Calu3 (cell line): ENCODE measurements at regions of chr3 and their contacts with region 1.

Region 1: DNA sequence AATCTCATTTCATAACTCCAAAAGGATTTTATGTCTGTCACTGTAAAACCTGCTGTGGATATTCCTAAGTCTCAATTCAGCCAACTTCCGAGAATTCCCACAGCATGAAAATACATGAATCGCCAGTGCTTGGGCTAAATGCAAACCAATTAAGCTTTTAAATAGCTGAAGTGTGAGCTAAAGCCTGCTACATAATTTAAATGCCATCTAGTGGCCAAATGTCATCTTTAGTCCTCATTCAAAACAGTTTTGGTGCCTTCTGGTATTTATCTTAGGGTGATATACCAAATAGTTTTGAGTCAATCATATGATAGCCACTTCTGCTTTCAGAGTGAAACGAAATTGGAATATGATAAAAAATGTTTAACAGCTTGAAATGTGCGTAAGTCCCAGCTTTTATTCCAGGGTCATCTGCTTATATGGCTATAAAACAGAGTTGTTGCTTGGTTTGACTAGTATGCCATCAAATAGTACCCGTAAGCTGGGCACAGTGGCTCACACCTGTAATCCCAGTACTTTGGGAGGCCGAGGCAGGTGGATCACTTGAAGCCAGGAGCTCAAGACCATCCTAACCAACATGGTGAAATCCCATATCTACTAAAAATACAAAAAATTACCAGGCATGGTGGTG is 41.8 kb upstream of the CCNL1 start:
- DNase-seq: no peak
- H3K4me3 Mint-ChIP-seq: no peak overlapping the region
- H3K27ac Mint-ChIP-seq: no peak overlapping the region
- H3K4me1 Mint-ChIP-seq: no peaks in the 10 kb centered on the region
- H3K27me3 Mint-ChIP-seq: no peaks in the 10 kb centered on the region
- CTCF ChIP-seq: peak; percentile 64

Region 2: GRCh38 chr3:155995525-155996351 is 1206.0 kb before region 1 on chr3:
- CTCF ChIA-PET with region 1: no interaction called
- intact Hi-C with region 1: loop called (anchors 5 kb)
- DNase-seq: no peak
- H3K4me3 Mint-ChIP-seq: no peak overlapping the region
- H3K27ac Mint-ChIP-seq: no peak overlapping the region
- H3K4me1 Mint-ChIP-seq: peaks cover 7% of the 10 kb centered on the region
- H3K27me3 Mint-ChIP-seq: peaks cover 12% of the 10 kb centered on the region
- CTCF ChIP-seq: peak; percentile 36

Region 3: DNA sequence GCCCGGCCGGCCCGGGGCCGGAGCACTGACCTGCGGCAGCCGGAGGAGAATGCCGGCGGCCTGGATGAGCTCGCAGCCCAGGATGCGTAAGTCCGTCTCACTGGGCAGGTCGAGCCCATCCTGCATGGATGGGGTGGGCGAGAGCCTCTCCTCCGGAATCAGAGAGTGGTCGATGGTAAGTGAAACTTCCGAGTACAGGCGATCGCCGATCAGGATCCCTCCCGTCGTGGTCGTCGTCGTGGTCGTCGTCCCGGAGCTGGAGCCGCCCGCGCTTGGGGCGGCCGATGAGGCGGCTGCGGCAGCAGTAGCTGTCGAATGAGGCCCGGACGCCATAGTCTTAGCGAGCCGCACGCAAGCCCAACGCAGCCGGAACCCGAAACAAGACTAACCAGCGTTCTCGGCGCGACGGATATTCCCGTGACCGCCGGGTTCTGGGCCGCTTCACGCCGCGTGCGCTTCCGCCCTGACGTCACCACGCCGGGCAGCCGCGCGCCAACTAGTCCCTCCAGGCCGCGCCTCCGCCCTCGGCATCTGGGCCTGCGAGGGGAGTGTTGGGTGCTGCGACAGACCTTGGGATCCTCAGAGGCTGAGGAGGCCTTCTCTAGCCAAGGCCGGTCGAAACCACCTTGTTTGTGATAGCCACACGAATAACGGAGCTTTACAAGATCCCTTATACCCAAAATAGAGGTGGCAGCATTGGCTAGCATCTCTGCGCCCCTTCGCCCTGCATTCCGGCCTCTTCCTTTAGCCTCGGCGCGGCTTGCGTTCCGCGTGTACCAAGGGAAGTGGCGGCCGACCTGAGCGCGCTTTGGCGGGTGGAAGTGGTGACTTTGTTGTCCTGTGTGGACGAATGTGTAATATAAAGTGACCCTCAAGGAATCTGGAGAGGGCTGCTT is 41.8 kb before region 1 on chr3 and contains the start of gene CCNL1:
- CTCF ChIA-PET with region 1: interaction called, 15 read pairs
- intact Hi-C with region 1: loop called (anchors 1 kb)
- DNase-seq: peak; percentile 99
- H3K4me3 Mint-ChIP-seq: peak within 1 kb of the TSS; percentile 89
- H3K27ac Mint-ChIP-seq: peak within 1 kb of the TSS; percentile 99
- H3K4me1 Mint-ChIP-seq: peaks cover 58% of the 10 kb centered on the region
- H3K27me3 Mint-ChIP-seq: no peaks in the 10 kb centered on the region
- CTCF ChIP-seq: no peak
- total RNA-seq, gene CCNL1: 291 and 303 TPM in 2 replicates

Region 4: DNA sequence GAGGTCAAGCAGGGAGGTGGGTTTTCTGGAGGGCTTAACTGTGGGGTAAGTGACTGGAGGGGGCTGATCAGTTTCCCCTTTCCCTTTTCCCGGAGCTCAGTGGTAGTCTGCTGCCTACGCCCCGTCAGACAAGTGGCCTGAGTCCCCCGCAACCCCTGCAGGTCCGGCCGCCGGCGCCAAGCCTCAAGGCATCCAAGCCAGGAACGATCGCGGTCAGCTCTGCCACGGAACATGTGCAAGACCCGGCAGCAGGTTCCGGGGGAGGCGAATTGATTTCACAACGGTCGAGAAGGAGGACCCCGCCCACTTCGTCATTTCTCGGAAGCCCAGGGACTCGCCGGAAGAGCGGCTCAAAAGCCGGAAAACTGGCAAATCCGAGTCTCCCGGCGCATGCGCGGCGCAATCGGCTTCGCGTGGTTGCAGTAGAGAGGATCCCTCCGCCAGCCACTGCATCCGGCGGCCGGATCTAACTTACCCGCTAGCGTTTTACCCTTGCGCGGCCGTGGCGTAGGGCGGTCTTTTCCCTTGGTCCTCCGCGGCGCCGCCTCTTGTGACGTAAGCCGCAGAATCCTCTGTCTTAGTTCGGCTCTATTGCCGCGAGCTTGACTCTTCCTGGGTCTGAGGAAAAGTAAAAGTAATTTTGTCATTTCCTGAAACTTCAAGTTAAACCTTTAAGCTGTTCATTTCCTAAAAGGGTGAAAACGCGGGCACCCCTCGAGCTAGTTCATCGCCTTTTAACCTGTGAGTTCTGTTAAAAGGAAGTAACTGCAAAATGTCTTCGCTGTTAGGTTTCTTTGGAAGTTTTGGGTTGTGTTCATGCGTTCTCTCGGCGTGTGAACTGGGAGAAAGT is 26.9 kb before region 1 on chr3:
- CTCF ChIA-PET with region 1: interaction called, 19 read pairs
- intact Hi-C with region 1: no loop called
- DNase-seq: peak; percentile 100
- H3K4me3 Mint-ChIP-seq: peak overlapping the region; percentile 78
- H3K27ac Mint-ChIP-seq: peak overlapping the region; percentile 92
- H3K4me1 Mint-ChIP-seq: peaks cover 31% of the 10 kb centered on the region
- H3K27me3 Mint-ChIP-seq: no peaks in the 10 kb centered on the region
- CTCF ChIP-seq: no peak

Region 5: DNA sequence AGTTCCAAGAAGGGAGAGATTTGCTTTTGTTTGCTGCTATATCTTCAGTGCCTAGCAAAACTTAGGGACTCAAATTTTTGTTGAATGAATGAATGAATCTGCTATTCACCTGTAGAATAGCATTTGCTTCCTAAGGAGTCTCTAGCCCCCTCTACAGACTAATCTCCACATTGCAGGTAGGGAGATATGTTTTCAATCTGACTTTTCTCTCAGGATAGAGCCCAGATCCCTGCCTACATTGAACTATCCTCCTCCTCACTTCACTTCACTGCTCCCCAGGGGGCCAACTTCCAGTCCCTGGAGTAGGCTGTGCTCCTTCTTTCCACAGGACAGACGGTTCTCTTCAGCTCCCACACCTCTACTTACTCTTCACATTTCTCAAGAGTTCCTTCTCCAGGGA is 153.0 kb after region 1 on chr3:
- CTCF ChIA-PET with region 1: interaction called, 6 read pairs
- intact Hi-C with region 1: loop called (anchors 1 kb)
- DNase-seq: peak; percentile 70
- H3K4me3 Mint-ChIP-seq: no peak overlapping the region
- H3K27ac Mint-ChIP-seq: no peak overlapping the region
- H3K4me1 Mint-ChIP-seq: peaks cover 8% of the 10 kb centered on the region
- H3K27me3 Mint-ChIP-seq: no peaks in the 10 kb centered on the region
- CTCF ChIP-seq: peak; percentile 29

Region 6: DNA sequence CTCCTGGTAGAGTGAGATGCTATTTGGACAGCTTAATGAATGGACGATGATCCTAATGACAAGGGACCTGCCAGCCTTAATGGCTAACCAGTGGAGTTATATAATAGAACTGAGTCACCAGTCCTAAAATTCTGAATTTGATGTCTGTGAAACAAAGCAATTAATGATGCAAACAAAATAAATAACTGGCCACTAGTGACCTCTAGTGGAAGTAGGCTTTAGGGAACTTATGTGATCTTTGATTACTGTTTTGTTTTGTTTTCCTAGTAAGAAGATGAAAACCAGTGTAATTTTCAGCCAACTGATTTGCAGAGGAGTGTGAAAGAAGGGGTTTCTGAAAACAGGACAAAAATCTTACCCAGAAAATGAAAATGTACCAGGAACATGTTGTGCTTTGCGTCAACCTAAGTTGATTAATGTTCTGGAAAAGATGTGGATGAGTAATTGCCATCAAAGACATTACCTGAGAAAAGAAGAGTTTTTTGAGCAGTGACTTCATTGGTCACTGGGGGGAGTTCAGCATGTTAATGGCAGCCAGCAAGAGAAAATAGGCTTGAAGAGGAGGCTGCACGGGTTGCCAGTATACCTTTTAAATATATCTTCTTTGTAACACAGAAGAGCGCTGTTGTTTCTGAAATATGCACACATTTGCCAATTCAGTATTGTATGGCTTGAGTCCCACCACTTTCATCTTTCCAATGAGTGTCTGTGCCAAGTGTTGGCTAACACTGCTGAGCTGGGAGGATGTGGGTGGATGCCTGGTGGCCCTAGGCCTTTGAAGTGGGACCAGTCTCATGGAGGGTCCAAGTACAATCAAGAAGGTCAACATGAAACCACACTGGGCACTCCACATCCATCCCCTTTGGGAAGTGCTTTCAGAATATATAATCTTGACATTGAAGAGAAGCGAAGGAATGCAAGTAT is 292.1 kb after region 1 on chr3:
- CTCF ChIA-PET with region 1: interaction called, 14 read pairs
- intact Hi-C with region 1: loop called (anchors 1 kb)
- DNase-seq: peak; percentile 36
- H3K4me3 Mint-ChIP-seq: no peak overlapping the region
- H3K27ac Mint-ChIP-seq: no peak overlapping the region
- H3K4me1 Mint-ChIP-seq: peaks cover 43% of the 10 kb centered on the region
- H3K27me3 Mint-ChIP-seq: no peaks in the 10 kb centered on the region
- CTCF ChIP-seq: peak; percentile 62